ENCODE measurements at regions of chr2 and their contacts with region 1.

Region 1: GRCh38 chr2:202339071-202339870 is 36.9 kb upstream of the BMPR2 start:
- DNase-seq: peak; percentile 80
- H3K4me3 ChIP-seq: no peak overlapping the region
- H3K27ac ChIP-seq: no peak overlapping the region
- H3K4me1 ChIP-seq: peaks cover 31% of the 10 kb centered on the region
- H3K27me3 ChIP-seq: no peaks in the 10 kb centered on the region
- CTCF ChIP-seq: no peak
- POLR2A ChIP-seq: no peak

Region 2: DNA sequence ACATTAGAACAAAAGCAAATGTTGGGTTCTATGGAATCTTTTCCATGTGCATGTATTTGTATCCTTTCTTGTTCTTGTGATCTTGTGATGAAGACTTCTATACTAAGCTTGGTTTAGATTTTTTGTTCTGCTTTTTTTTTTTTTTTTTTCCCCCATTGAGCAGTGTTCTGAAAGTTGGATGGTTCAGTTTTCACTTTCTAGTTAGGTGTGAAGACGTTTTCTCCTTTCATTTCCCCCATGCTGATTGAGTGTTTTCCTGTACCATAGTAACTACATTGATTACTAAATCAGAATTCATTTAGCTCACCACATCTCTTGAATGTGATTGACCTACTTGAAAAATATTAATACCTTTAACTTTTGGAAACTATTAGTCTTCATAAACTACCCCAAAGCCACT is 39.6 kb before region 1 on chr2:
- CTCF ChIA-PET with region 1: interaction called, 4 read pairs
- POLR2A ChIA-PET with region 1: no interaction called
- dilution Hi-C with region 1: no loop called
- intact Hi-C with region 1: loop called (anchors 2 kb)
- DNase-seq: no peak
- H3K4me3 ChIP-seq: no peak overlapping the region
- H3K27ac ChIP-seq: no peak overlapping the region
- H3K4me1 ChIP-seq: peaks cover 7% of the 10 kb centered on the region
- H3K27me3 ChIP-seq: no peaks in the 10 kb centered on the region
- CTCF ChIP-seq: no peak
- POLR2A ChIP-seq: no peak

Region 3: DNA sequence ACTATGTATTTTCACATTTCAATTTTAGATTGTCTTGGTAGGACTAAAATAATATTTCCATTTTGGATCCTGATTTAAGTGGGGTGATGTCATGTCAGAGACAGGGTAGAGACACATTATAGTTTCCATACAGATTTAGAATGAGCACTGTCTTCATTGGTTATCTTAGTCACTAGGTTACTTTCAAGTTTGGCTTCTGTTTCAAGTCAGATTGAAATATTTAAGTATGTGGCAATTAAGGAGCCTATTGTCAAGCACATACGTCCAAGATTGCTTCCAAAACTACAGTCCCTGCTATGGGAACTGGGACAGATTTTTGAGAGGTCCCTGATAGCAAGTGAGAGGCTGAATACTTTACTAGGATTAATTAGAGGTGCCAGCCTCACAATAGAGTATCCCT is 206.3 kb after region 1 on chr2:
- CTCF ChIA-PET with region 1: no interaction called
- POLR2A ChIA-PET with region 1: no interaction called
- dilution Hi-C with region 1: no loop called
- intact Hi-C with region 1: no loop called
- DNase-seq: no peak
- H3K4me3 ChIP-seq: no peak overlapping the region
- H3K27ac ChIP-seq: no peak overlapping the region
- H3K4me1 ChIP-seq: no peaks in the 10 kb centered on the region
- H3K27me3 ChIP-seq: no peaks in the 10 kb centered on the region
- CTCF ChIP-seq: no peak
- POLR2A ChIP-seq: no peak